Left cardiac atrium (tissue), 4 donors: ENCODE measurements at regions of chr6 and their contacts with region 1.

Region 1: GRCh38 chr6:37705239-37706051 is 7.8 kb upstream of the MDGA1 start:
- DNase-seq: peak; percentile 87
- ATAC-seq: peak; percentile 92

Region 2: GRCh38 chr6:38001386-38001785 is 295.9 kb after region 1 on chr6:
- intact Hi-C with region 1: loop called in 1 of 2 experiments (anchors 10 kb)
- DNase-seq: no peak
- ATAC-seq: no peak